Sciatic nerve (tissue), 2 donors: ENCODE measurements at regions of chr4 and their contacts with region 1.

Region 1: DNA sequence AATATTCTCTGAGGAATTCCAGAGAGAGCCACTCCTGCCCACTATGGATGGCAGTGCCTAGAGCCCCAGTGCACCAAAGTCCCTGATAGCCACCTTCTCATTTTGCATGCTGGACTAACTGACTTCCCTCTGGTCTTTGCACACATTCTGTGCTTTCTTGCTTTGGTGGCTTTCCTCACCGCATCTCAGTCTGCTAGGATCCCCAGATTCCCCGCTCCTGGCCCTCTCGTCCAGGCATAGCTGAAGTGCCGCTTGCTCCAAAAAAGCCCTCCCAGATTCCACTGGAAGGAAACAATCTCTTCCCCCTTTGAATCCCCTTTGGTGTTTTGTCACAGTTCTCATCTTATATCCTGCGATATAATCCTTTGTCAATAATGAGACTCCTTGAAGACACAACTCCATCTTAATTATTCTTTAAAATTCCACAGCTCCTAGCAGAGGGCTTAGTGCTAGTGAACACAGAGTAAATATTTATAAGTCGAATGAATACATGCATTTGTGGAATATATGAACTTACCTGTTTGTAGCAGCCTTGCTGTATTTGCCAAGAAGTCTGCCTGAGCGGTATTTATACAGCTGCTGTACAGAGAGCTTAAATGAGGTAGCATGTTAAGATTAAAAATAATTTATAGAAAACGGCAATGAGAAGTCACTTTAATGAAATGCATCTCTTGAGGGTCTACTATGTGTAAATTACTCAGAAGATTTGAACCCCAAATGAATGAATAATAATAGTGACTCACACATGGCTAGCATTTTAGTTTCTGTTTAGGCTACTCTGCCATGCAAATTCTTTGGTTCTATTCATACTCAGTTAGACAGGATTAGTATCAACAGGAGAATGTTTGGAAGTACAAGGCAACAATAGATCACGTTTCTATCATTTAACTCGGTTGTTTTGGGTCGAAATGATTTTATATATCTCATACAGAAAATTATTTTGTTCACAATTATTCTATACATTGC is 421.9 kb upstream of the TENM3 start:
- DNase-seq: no peak
- ATAC-seq: peak; percentile 31

Region 2: DNA sequence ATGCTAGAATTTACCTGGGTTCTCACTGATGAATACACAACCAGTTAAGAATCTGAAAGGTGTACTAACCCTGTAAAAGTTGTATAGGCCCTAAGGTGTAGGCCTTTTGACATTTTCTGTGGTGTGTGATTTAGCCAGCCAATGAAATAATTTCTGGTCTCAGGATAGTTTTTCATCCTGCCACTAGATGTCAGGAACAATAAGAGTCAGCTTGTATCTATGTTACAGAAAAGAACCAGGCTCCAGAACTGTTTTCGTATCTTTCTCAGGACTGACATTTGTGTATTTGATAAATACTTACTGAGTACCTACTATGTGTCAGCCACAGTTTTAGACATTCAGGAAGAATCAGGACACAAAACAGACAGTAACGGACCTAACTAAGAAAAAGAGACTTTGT is 251.8 kb before region 1 on chr4:
- intact Hi-C with region 1: loop called (anchors 5 kb)
- DNase-seq: no peak
- ATAC-seq: no peak